ENCODE measurements at regions of chr6 and their contacts with region 1.

Region 1: DNA sequence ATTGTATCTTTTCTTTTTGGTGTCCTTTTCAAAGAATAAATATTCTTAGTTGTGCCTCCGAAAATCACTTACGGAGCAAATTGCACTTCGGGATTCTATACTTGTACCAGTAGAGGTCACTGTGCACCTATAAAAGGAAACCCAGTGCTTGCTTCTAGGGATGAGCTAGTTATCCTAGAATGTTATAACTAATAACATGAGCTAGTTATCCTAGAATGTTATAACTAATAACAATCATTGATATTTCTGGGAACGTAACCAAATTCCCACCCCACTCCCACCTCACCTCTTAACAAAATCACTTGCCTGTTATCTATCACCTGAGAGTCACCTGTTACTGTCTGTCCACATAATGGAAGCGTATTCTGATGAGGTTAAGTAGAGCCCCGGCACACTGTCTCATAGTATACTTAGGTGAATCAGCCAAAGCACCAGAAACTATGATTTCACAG is 126.9 kb upstream of the TIAM2 start:
- DNase-seq: no peak
- H3K4me3 ChIP-seq: no peak overlapping the region
- H3K27ac ChIP-seq: no peak overlapping the region
- H3K4me1 ChIP-seq: no peaks in the 10 kb centered on the region
- H3K27me3 ChIP-seq: no peaks in the 10 kb centered on the region
- CTCF ChIP-seq: peak; percentile 39 to 73 (median 72)

Region 2: DNA sequence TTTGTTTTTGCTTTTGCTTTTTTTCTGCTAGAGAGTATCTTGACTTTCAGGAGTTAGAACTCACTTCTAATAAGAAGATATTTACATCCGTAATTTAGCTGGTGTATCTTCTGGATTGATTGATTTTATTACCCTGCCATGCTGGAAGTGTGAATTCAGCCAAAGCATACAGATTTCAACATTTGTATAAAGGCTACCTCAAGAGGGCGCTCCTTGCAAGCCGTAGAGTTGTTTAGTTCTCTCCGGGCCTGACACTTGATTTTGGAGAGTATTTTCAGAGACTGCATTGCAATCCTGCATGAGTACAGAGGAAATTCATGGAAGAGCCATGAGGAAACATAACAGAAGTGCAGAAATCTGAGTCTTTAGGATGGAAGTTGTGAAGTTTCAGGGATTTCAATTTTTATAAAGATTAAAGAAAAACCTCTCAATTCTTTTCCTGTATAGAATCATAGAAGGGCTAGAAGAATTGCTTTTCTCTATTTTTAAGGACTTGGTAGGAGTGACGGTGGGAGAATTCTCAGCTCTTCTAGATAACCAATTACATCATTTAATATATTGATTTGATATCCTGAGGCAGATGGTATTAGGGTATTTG is 60.3 kb after region 1 on chr6:
- intact Hi-C with region 1: loop called (anchors 2 kb)
- DNase-seq: peak in 1 of 2 donors; percentile 79
- H3K4me3 ChIP-seq: no peak overlapping the region
- H3K27ac ChIP-seq: no peak overlapping the region
- H3K4me1 ChIP-seq: no peaks in the 10 kb centered on the region
- H3K27me3 ChIP-seq: no peaks in the 10 kb centered on the region
- CTCF ChIP-seq: peak; percentile 66 to 81 (median 68)

Region 3: DNA sequence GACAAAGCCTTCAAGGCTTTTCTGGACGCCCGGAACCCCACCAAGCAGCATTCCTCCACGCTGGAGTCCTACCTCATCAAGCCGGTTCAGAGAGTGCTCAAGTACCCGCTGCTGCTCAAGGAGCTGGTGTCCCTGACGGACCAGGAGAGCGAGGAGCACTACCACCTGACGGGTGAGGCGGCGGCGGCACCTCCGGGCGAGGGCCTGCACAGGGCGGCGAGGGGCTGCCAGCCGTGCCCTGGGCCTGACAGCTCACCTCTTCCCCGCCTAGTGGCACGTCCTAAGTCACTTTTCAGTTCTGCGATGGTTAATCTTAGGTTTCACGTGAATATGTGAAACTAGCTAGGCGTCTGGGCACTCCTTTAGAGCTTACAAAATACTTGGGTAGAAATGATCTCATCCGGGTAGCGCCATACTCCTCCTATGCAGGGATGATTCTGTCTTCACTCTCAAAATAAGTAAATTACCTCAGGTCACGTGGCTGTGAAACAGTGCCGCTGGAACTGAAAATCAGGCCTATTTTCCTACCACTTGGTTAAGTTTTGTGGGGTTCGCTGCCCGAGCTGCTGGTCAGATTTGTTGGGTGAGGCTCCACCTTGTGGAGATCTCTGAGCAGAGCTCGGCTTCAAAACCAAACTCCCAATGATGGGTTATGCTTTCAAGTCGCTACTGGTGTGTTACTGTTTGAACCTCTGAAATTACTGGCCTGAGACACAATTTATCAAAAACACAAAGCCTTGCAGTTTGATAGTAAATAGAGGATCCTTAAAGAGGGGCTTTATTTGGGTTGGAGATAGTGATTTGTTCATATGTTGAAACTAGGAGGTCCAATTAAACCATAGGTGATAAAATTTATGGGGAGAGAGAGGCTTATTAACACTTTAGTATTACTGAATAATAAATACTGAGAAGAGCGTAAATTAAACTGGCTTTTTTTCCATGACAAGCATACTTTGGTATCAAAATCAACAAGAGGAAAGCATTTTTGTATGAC is 380.1 kb after region 1 on chr6:
- intact Hi-C with region 1: loop called (anchors 10 kb)
- DNase-seq: peak in 1 of 2 donors; percentile 79
- H3K4me3 ChIP-seq: peak overlapping the region; percentile 27 to 30
- H3K27ac ChIP-seq: peak overlapping the region; percentile 43 to 76
- H3K4me1 ChIP-seq: peaks cover 0 to 20% of the 10 kb centered on the region in 2 donors
- H3K27me3 ChIP-seq: no peaks in the 10 kb centered on the region
- CTCF ChIP-seq: peak; percentile 62 to 85 (median 67)